ENCODE measurements at regions of chr21 and their contacts with region 1.

Region 1: DNA sequence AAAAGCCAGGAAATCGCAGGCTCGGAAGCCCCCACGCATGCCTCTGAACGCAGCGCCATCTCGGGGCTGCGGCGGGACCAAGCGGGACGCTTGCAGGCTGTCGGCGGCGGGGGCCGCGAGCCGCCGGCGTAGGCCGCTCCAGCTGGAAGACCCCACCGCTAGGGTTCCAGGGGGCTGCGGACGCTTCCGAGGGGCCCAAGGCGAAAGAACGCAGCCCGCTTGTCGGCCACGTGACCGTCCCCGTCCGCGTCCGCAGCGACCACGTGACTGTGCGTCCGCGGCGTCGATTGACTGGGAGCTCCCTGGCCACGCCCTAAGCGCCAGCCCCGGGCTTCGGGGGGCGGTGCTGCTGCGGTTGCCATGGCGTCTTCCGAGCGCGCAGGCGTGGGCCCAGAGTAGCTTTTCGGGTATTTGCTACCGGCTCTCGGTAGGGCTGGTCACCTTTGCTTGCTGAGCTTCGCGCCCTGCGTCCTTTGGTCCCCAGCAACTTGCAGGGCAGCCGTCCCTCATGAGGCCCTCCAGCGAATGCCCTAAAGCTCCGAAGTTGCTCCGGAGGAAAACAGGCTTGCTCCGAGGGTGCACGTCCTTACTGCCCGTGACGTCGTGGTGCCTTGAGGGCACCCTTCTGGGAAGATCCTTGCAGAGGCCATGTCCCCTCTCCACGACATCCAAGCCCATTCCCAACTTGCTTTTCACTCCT is 197.2 kb downstream of the DYRK1A start:
- DNase-seq: peak; percentile 97 to 98
- ATAC-seq: peak; percentile 98
- H3K4me3 ChIP-seq: peak overlapping the region; percentile 43 to 58
- H3K27ac ChIP-seq: peak overlapping the region; percentile 40 to 88
- H3K4me1 ChIP-seq: no peaks in the 10 kb centered on the region
- H3K27me3 ChIP-seq: no peaks in the 10 kb centered on the region

Region 2: DNA sequence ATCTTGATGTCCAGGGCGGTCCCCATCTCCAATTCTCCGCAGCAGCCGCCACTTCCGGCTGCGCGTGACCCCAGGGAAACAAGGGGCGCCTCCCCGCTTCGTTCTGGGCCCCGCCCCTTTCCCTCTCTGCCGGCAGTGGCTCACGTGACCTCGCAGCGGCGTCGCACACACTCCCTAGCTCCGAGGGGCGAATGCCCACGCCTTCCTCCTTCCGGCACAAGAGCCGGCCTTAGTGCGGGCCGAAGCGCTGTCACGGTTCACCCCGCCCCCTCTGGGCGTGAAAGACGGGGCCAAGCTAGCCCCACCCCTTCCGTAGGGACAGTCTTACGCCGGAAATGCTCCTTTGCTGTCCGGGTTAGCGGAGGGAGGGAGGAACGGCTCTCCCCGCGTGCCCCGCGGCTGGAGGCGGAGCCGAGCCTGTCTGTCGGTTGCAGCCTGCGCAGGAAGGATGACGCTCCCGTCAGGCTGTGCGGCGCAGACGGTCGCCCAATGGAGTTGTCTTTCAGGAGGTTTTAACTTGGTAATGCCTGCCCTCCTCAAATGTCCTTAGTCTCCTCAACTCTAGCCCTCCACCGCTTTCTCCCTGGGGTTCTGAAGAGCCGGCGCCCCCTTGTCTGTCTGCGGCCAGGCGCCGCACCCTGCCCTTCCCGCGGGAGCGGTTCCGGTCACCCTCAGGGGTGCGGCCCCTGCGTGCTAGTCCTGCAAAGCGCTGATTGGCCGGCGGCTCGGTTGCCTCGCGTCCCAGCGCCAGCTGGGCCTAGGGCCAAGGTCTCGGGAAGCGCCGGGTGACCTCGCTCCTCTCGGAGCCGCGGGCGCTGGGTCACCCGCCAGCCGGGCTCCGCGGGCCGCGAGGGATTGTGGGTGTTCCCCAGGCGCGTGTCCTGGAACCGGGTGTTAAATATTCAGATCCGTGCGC is 296.3 kb before region 1 on chr21 and contains the start of gene VPS26C:
- intact Hi-C with region 1: loop called (anchors 10 kb)
- DNase-seq: peak; percentile 99
- ATAC-seq: peak; percentile 99
- H3K4me3 ChIP-seq: peak within 1 kb of the TSS; percentile 72 to 76
- H3K27ac ChIP-seq: peak within 1 kb of the TSS; percentile 16 to 93
- H3K4me1 ChIP-seq: peaks cover 0 to 4% of the 10 kb centered on the region in 2 donors
- H3K27me3 ChIP-seq: no peaks in the 10 kb centered on the region
- total RNA-seq, gene VPS26C: 46.5 to 61.6 TPM

Region 3: DNA sequence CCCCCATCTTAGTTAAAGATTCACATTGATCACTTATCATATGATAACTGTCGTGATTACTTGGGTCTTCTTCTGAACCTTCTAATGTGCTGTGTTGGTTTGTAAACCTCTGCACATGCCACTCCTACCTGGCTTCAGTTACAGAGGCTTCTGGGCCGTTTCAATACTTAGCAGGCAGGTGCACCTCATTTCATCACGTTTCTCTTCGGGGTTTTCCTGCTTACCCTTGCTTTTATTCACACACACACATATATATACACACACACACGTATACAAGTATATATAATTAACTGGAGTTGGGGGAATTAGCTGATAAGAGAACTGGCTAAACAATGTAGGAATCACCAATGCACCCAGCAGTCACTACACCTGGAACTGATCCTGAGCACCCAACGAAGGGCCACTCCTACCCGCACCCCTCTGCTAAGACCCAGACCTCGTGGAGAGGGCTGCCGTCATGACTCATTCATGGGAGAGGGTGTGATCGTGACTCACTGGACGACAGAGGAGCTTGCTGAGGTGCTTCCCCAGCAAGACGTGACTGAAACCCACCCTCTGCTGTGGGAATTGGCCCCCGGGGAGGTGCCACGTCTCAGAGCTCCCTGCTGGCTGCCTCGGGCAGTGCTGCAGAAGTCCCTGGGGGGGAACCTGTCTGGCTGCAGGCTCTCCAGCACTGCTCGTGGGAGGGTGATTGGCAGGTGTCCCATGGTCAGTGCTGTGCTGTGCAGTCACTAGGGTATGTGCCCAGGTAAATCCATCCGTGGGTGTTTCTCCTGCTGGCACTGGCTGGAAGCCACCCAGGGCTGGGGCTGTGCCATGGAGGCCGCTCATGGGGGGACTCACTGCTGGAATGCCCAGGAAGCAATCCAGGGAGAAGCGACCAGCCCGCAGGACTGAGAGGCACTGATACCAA is 30.7 kb before region 1 on chr21:
- intact Hi-C with region 1: no loop called
- DNase-seq: peak in 1 of 2 donors; percentile 75
- ATAC-seq: peak; percentile 56
- H3K4me3 ChIP-seq: no peak overlapping the region
- H3K27ac ChIP-seq: no peak overlapping the region
- H3K4me1 ChIP-seq: peaks cover 0 to 3% of the 10 kb centered on the region in 2 donors
- H3K27me3 ChIP-seq: no peaks in the 10 kb centered on the region

Region 4: GRCh38 chr21:37658817-37659458 is 95.1 kb after region 1 on chr21:
- intact Hi-C with region 1: loop called in 1 of 2 experiments (anchors 5 kb)
- DNase-seq: no peak
- ATAC-seq: peak; percentile 62
- H3K4me3 ChIP-seq: no peak overlapping the region
- H3K27ac ChIP-seq: peak overlapping the region in 1 of 2 donors; percentile 82
- H3K4me1 ChIP-seq: peaks cover 0 to 11% of the 10 kb centered on the region in 2 donors
- H3K27me3 ChIP-seq: no peaks in the 10 kb centered on the region

Measured in aorta (tissue), 5 donors.